Activated CD8-positive, alpha-beta T cell treated with anti-CD3 and anti-CD28 coated beads for 36 hours (primary cell): ENCODE measurements at regions of chr1 and their contacts with region 1.

Region 1: DNA sequence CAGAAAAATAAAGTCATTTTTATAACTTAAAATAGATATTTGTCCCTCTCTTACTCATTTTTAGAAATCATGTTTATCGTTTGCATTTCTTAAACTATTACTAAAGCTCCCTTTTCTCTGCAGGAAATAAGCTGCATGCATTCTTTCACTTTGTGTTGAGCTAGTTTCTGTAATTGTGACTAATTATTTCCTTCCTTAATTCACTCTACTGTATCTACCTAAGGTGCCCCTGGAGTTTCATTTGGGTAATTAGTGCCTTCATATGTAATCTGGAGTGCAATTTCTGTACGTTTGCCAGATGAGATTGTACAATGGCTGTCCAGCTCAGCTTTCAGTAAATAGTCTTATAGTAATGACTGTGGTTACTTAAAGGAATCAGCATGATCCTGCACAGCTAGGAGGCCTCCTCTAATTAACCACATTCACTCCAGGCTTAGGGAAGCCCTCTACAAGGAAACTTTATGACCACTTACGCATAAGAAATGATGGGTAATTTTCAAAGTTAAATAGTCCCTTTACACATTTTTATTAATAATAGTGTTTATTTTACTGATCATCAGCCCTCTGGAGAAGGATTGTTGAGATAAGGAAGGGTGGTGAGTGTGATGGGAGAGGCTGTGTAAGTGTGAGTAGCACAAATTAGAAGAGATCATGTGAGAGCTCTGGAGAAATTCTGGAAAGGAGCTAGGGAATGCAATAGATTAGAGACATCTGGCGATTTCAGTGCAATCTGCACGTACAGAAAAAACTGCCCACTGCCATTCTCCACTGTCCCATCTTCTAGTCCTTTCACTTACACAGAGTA is 86.8 kb downstream of the LRRC8C start:
- DNase-seq: peak; percentile 33
- ATAC-seq: peak; percentile 80
- H3K4me3 Mint-ChIP-seq: peak overlapping the region; percentile 53
- H3K27ac Mint-ChIP-seq: peak overlapping the region; percentile 98
- H3K4me1 Mint-ChIP-seq: peaks cover 90% of the 10 kb centered on the region
- H3K27me3 Mint-ChIP-seq: no peaks in the 10 kb centered on the region
- CTCF ChIP-seq: peak; percentile 50

Region 2: GRCh38 chr1:89566761-89567174 is 152.9 kb before region 1 on chr1:
- CTCF ChIA-PET with region 1: no interaction called
- POLR2A ChIA-PET with region 1: no interaction called
- intact Hi-C with region 1: no loop called
- DNase-seq: no peak
- ATAC-seq: no peak
- H3K4me3 Mint-ChIP-seq: no peak overlapping the region
- H3K27ac Mint-ChIP-seq: no peak overlapping the region
- H3K4me1 Mint-ChIP-seq: peaks cover 50% of the 10 kb centered on the region
- H3K27me3 Mint-ChIP-seq: no peaks in the 10 kb centered on the region
- CTCF ChIP-seq: no peak

Region 3: DNA sequence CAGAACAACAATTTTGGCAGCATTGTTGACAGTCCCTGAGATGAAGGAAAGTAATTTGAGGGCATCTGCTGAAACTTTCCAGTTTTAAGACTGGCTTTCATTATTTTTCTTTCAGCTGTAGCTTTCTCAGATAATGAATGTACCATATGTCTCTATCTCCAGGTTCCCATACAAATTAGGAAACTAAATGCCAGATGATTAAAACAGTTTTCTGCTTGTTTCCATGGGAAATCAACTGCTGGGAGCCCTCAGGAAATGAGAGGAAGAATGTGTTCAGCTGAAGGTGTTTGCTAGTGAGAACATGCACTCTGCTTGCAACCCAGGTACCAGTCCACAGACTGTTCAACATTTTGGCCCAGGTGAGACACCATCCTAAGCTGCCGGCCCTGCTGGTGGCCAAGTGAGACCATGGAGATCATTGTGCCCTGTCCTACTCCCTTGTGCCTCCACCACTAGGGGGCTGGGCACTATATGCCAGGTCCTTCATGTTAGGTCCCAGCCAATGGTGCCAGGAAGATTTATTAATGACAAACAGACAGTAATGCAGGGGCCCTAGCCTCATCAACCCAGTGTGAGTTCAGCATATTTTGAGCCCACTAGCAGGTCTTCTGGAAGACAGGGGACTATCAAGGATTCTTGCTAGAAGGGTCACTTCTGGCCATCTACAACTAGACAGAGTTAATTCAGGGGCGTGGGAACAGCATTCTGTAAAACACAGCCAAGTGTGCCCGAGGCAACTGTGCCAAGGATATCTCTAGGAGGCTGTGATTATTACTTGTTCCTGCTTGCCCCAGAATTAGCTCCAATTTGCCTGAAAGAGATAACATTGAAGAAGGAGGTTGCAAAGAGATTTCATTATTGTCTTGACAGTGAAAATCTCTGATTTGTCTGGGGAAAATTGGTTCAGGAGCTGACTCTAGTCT is 103.8 kb before region 1 on chr1:
- CTCF ChIA-PET with region 1: interaction called, 12 read pairs
- POLR2A ChIA-PET with region 1: interaction called, 3 read pairs
- intact Hi-C with region 1: no loop called
- DNase-seq: peak; percentile 48
- ATAC-seq: no peak
- H3K4me3 Mint-ChIP-seq: no peak overlapping the region
- H3K27ac Mint-ChIP-seq: no peak overlapping the region
- H3K4me1 Mint-ChIP-seq: peaks cover 70% of the 10 kb centered on the region
- H3K27me3 Mint-ChIP-seq: no peaks in the 10 kb centered on the region
- CTCF ChIP-seq: peak; percentile 54

Region 4: GRCh38 chr1:89698624-89699023 is 21.1 kb before region 1 on chr1:
- CTCF ChIA-PET with region 1: interaction called, 16 read pairs
- POLR2A ChIA-PET with region 1: interaction called, 8 read pairs
- intact Hi-C with region 1: no loop called
- DNase-seq: no peak
- ATAC-seq: no peak
- H3K4me3 Mint-ChIP-seq: peak overlapping the region; percentile 39
- H3K27ac Mint-ChIP-seq: peak overlapping the region; percentile 96
- H3K4me1 Mint-ChIP-seq: peaks cover 90% of the 10 kb centered on the region
- H3K27me3 Mint-ChIP-seq: no peaks in the 10 kb centered on the region
- CTCF ChIP-seq: no peak

Region 5: DNA sequence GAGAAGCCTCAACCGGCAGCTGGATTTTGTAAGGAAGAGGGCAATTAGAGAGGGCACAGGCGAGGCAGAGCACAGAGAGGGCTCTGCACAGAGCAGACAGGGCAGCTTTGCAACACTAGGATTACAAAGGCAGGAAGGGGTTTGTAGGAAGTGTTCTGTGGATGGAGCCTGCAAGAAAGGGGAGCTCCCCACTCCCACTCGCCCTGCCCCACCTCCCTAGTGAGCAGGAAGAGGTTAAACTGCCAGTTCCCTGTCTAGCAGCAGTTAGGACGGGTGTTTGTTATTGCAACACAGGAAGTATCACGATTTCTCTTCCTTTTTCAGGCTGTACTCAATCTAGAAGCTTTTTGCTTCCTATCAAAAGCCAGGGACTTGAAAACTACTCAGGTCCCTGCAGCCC is 37.8 kb after region 1 on chr1:
- CTCF ChIA-PET with region 1: interaction called, 72 read pairs
- POLR2A ChIA-PET with region 1: interaction called, 15 read pairs
- intact Hi-C with region 1: loop called (anchors 2 kb)
- DNase-seq: peak; percentile 86
- ATAC-seq: peak; percentile 86
- H3K4me3 Mint-ChIP-seq: peak overlapping the region; percentile 73
- H3K27ac Mint-ChIP-seq: peak overlapping the region; percentile 93
- H3K4me1 Mint-ChIP-seq: peaks cover 89% of the 10 kb centered on the region
- H3K27me3 Mint-ChIP-seq: no peaks in the 10 kb centered on the region
- CTCF ChIP-seq: no peak

Region 6: DNA sequence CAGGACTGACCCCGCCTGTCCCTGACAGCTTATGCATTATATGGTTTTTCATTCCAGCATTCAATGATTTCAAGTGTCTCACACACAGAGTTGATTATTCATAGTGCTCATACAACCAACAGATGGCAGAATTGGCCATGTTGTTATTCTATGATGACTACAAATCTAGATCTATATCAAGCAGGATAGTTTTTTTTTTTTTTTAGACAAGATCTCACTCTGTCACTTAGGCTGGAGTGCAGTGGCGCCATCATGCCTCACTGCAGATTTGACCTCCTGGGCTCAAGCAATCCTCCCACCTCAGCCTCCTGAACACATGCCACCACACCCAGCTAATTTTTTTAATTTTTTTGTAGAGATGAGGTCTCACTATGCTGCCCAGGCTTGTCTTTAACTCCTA is 61.0 kb after region 1 on chr1:
- CTCF ChIA-PET with region 1: interaction called, 10 read pairs
- POLR2A ChIA-PET with region 1: interaction called, 4 read pairs
- intact Hi-C with region 1: no loop called
- DNase-seq: peak; percentile 62
- ATAC-seq: peak; percentile 68
- H3K4me3 Mint-ChIP-seq: peak overlapping the region; percentile 36
- H3K27ac Mint-ChIP-seq: peak overlapping the region; percentile 93
- H3K4me1 Mint-ChIP-seq: peaks cover 48% of the 10 kb centered on the region
- H3K27me3 Mint-ChIP-seq: no peaks in the 10 kb centered on the region
- CTCF ChIP-seq: peak; percentile 56

Region 7: DNA sequence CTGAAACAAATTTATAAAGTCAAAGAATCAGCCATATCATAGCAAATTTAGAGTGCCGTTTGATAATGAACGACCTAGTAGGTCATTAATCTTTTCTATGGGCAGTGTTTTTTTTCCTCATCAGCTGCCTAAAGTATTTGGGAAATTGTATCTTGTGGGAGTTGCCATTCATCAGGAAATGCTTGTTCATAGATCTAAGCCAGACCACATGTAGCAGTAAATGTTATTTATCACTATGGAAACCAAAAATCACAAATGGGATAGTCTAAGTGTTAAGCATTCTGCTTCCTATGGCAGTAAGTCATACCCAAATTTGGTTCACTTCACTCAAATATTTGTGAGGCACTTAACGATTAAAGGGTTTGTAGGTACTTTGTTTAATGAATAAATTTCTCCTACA is 154.1 kb after region 1 on chr1:
- CTCF ChIA-PET with region 1: no interaction called
- POLR2A ChIA-PET with region 1: no interaction called
- intact Hi-C with region 1: no loop called
- DNase-seq: no peak
- ATAC-seq: no peak
- H3K4me3 Mint-ChIP-seq: no peak overlapping the region
- H3K27ac Mint-ChIP-seq: no peak overlapping the region
- H3K4me1 Mint-ChIP-seq: peaks cover 66% of the 10 kb centered on the region
- H3K27me3 Mint-ChIP-seq: no peaks in the 10 kb centered on the region
- CTCF ChIP-seq: no peak